ENCODE measurements at regions of chr6 and their contacts with region 1.

Region 1: DNA sequence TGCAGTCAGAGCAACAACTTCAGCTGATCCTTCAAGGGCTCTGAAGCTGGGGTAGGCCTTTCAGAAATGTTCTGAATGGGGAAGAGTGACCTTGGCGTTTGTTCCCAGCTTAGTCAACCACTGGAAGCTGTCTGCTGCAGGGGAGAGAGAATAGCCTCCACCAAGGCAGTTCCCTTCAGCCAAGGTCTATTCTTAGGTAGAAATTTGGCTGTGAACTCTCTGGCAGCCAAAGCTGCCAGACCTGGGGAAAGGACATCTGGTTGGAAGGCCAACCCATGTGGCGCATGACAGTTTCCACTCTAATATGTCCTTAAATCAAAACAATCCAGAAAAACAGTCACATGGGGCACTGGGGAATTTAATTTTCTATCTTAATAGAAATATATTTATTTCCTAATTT is 60.1 kb downstream of the FBXO5 start:
- DNase-seq: no peak
- H3K4me3 ChIP-seq: no peak overlapping the region
- H3K27ac ChIP-seq: no peak overlapping the region
- H3K4me1 ChIP-seq: no peaks in the 10 kb centered on the region
- H3K27me3 ChIP-seq: no peaks in the 10 kb centered on the region
- CTCF ChIP-seq: no peak

Region 2: GRCh38 chr6:152716322-152716721 is 206.4 kb before region 1 on chr6:
- intact Hi-C with region 1: no loop called
- DNase-seq: no peak
- H3K4me3 ChIP-seq: no peak overlapping the region
- H3K27ac ChIP-seq: no peak overlapping the region
- H3K4me1 ChIP-seq: no peaks in the 10 kb centered on the region
- H3K27me3 ChIP-seq: no peaks in the 10 kb centered on the region
- CTCF ChIP-seq: no peak

Region 3: GRCh38 chr6:153340568-153340967 is 417.9 kb after region 1 on chr6:
- intact Hi-C with region 1: loop called (anchors 5 kb)
- DNase-seq: no peak
- H3K4me3 ChIP-seq: no peak overlapping the region
- H3K27ac ChIP-seq: no peak overlapping the region
- H3K4me1 ChIP-seq: no peaks in the 10 kb centered on the region
- H3K27me3 ChIP-seq: no peaks in the 10 kb centered on the region
- CTCF ChIP-seq: no peak

Measured in tibial artery (tissue), 4 donors.